ENCODE measurements at regions of chr3 and their contacts with region 1.

Region 1: GRCh38 chr3:118884748-118885206 is 149.9 kb downstream of the IGSF11 start:
- DNase-seq: peak; percentile 57
- H3K4me3 ChIP-seq: peak overlapping the region in 1 of 2 experiments; percentile 44; a peak in 1 of 4 replicates
- H3K27ac ChIP-seq: no peak overlapping the region
- H3K4me1 ChIP-seq: no peaks in the 10 kb centered on the region
- H3K27me3 ChIP-seq: no peaks in the 10 kb centered on the region
- CTCF ChIP-seq: peak; percentile 96
- EP300 ChIP-seq: no peak
- RAD21 ChIP-seq: peak; percentile 58

Region 2: DNA sequence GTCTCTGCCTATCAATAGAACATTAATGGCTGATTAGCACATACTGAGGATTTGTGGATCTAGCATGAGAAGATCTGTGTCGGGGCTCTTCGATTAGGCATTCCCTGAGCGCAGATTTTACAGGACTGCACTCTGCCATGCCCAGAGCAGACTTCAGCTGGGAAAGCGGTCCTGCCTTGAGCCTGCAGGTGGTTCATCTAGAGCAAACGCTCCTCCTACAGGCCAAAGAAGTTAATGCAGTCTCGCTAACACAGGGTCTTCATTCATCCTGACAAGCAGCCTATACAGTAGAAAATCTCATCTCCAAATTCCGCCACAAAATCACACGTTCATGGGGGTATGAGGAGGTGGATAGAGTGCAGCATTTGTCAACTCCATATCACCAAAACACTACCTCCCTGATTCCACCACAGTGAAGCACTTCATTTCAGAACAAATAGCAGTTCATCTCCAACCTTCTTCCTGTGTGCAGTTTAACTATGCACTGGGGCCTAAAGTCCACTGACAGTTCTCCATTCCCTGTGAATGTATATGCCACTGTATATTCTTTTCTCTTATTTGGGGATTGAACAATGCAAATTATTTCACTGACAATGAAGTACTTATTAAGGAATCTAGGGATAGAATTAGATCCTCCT is 256.0 kb before region 1 on chr3:
- CTCF ChIA-PET with region 1: no interaction called
- POLR2A ChIA-PET with region 1: no interaction called
- DNase-seq: peak; percentile 66
- H3K4me3 ChIP-seq: no peak overlapping the region; a peak in 1 of 4 replicates
- H3K27ac ChIP-seq: no peak overlapping the region
- H3K4me1 ChIP-seq: peaks cover 0 to 4% of the 10 kb centered on the region in 2 experiments; a peak in 2 of 4 replicates
- H3K27me3 ChIP-seq: no peaks in the 10 kb centered on the region
- CTCF ChIP-seq: peak; percentile 77
- EP300 ChIP-seq: no peak
- RAD21 ChIP-seq: peak; percentile 99

Region 3: DNA sequence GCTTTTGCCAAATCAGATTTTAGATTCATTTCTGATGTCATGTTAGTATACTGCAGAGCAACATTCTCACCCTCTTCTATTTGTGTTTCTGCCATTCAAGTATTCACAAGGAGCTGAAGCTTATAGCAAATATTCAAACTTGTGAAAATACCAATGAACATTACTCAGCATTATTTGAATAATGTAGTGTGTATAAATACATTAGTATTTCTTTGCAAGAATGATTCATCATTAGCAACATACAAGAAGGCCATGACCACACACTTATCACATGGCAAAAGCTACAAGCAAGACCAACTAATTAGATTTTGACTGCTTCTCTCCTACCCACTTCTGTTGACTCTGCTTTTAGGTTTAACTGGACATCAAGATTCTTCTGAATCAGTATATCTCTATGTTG is 25.0 kb after region 1 on chr3:
- CTCF ChIA-PET with region 1: interaction called, 67 read pairs
- POLR2A ChIA-PET with region 1: no interaction called
- DNase-seq: no peak
- H3K4me3 ChIP-seq: no peak overlapping the region
- H3K27ac ChIP-seq: no peak overlapping the region
- H3K4me1 ChIP-seq: no peaks in the 10 kb centered on the region
- H3K27me3 ChIP-seq: no peaks in the 10 kb centered on the region
- CTCF ChIP-seq: no peak
- EP300 ChIP-seq: no peak
- RAD21 ChIP-seq: no peak

Region 4: GRCh38 chr3:118981494-118982134 is 96.8 kb after region 1 on chr3:
- CTCF ChIA-PET with region 1: interaction called, 11 read pairs
- POLR2A ChIA-PET with region 1: no interaction called
- DNase-seq: no peak
- H3K4me3 ChIP-seq: no peak overlapping the region
- H3K27ac ChIP-seq: no peak overlapping the region
- H3K4me1 ChIP-seq: no peaks in the 10 kb centered on the region; a peak in 1 of 4 replicates
- H3K27me3 ChIP-seq: no peaks in the 10 kb centered on the region
- CTCF ChIP-seq: no peak
- EP300 ChIP-seq: no peak
- RAD21 ChIP-seq: no peak

Region 5: GRCh38 chr3:119034256-119035013 is 149.7 kb after region 1 on chr3 and contains the start of gene IGSF11:
- CTCF ChIA-PET with region 1: interaction called, 432 read pairs
- POLR2A ChIA-PET with region 1: interaction called, 4 read pairs
- DNase-seq: peak; percentile 96
- H3K4me3 ChIP-seq: peak within 1 kb of the TSS; percentile 60 to 69
- H3K27ac ChIP-seq: no peak within 1 kb of the TSS
- H3K4me1 ChIP-seq: no peaks in the 10 kb centered on the region; a peak in 1 of 4 replicates
- H3K27me3 ChIP-seq: peaks cover 27% of the 10 kb centered on the region
- CTCF ChIP-seq: peak; percentile 54
- EP300 ChIP-seq: no peak
- RAD21 ChIP-seq: peak; percentile 62
- polyA plus RNA-seq, gene IGSF11: 0.07 and 0.08 TPM in 2 replicates

Region 6: DNA sequence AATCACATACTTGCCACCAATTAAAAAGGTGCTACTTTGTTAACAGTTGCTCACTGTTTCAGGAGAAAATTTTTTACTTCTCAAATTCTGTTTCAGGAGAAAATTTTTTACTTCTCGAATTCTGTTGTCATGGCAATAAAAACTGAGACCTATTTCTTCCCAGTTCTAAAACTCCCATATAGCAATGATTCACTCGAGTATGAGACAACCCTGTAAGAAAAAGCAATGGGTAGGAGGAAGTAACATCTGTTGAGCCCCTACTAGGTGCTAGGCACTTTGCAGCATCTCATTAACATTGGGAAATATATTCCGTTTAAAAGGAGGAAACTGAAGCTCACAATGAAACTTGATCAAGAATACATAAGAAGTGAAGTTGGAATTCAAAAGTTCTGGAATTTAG is 184.9 kb after region 1 on chr3:
- CTCF ChIA-PET with region 1: interaction called, 34 read pairs
- POLR2A ChIA-PET with region 1: no interaction called
- DNase-seq: no peak
- H3K4me3 ChIP-seq: no peak overlapping the region
- H3K27ac ChIP-seq: no peak overlapping the region
- H3K4me1 ChIP-seq: no peaks in the 10 kb centered on the region
- H3K27me3 ChIP-seq: no peaks in the 10 kb centered on the region
- CTCF ChIP-seq: no peak
- EP300 ChIP-seq: no peak
- RAD21 ChIP-seq: no peak

Region 7: DNA sequence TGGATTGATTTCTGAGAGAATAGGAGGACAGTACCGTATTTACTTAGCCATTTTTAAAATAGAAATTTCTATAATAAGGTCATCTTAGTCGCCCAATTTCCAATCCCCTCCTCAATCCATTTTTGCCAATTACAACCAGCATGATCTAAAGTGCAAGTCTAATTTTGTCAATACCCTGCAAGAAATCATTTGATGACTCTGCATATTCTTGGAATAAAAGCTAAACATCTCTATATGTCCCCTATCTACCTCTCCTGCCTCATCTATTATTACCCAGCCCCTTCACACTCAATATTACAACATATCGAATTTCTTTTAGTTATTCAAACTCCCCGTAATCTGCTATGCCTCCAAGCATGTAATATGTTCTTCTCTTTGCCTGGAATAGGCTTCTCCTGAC is 219.3 kb after region 1 on chr3:
- CTCF ChIA-PET with region 1: interaction called, 521 read pairs
- POLR2A ChIA-PET with region 1: no interaction called
- DNase-seq: no peak
- H3K4me3 ChIP-seq: no peak overlapping the region
- H3K27ac ChIP-seq: no peak overlapping the region
- H3K4me1 ChIP-seq: no peaks in the 10 kb centered on the region
- H3K27me3 ChIP-seq: no peaks in the 10 kb centered on the region
- CTCF ChIP-seq: no peak
- EP300 ChIP-seq: no peak
- RAD21 ChIP-seq: no peak

Region 8: DNA sequence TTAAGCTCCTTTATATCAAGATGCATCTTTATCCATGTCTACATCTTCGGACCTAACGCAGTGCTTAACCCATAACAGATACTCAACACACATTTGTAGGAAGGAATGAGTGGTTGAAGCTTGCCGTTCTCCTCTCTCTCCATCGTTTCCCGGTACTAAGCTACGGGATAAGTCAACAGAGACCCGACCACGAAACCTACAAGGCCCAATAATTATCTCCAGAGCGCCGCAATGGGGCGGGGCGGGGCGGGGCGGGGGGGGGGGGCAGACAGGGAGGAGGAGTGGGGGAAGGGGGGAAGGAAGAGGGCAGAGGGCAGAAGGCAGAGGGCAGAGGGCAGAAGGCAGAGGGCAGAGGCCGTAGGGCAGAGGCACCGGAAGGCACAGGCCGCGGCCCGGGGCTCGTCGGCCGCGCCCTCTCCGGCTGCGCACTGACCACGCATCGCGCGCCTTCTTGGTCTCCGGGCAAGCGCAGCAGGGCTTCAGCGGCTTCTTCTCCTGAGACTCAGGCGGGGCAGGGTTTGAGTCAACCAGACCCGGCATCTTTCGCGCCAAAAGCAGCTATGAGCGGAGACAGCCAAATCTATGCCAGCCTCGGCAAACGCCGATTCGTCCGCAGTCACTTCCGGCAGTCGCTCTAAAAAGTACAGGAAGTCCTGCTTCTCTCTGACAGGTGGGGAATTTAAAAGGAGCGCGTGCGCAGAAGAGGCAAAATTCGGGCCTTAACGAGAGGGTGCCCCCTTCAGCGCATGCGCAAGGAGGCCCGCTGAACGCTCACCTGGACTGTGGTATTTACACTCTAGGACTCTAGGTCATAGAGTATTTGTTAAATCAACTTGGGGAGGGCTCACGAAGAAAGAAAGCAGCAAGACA is 792.2 kb after region 1 on chr3 and contains the start of gene COX17:
- CTCF ChIA-PET with region 1: interaction called, 30 read pairs
- POLR2A ChIA-PET with region 1: no interaction called
- DNase-seq: peak; percentile 62
- H3K4me3 ChIP-seq: peak within 1 kb of the TSS; percentile 50 to 52
- H3K27ac ChIP-seq: peak within 1 kb of the TSS; percentile 29 to 81
- H3K4me1 ChIP-seq: peaks cover 0 to 27% of the 10 kb centered on the region in 2 experiments; a peak in 2 of 4 replicates
- H3K27me3 ChIP-seq: no peaks in the 10 kb centered on the region
- CTCF ChIP-seq: no peak
- EP300 ChIP-seq: no peak
- RAD21 ChIP-seq: no peak; the same call in 1 of the 2 replicates
- polyA plus RNA-seq, gene COX17: 15.1 and 21.5 TPM in 2 replicates

Region 9: DNA sequence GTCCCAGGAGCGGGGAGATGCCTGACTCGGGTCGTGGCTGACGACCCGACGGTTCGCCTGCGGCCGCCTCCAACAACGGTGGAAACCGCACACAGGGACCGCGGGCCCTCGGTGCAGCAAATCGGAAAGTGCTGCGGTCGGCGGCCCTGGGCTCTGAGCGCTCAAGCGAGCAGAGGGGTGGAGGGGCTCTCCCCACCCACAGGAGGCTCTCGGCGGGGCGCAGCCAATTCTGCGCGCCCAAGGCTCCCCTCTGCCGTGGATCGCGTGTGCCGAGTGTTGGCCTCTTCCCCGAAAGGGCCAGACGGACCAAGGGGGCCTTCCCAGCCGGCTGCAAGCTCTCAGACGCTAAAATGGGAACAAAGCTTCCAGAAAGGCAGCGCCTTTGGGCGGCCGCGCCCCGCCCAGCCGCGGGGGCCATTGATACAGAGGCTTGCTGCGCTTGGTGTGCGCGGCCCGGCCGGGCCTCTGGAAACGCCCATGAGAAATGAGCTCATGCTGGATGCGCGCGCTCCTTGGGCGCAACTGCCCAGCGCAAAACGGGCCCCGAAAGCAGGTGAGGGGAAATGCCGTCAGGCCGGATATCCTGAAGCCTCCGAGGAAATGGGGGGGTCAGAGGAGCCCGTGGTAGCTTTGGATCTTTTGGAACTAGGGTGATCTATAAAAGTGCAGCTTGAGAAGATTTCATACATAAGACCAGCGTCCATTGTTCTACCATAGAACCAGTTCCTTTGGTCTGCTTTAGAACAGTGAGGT is 1210.6 kb after region 1 on chr3:
- CTCF ChIA-PET with region 1: no interaction called
- POLR2A ChIA-PET with region 1: no interaction called
- DNase-seq: peak; percentile 77
- H3K4me3 ChIP-seq: peak overlapping the region; percentile 73 to 95
- H3K27ac ChIP-seq: peak overlapping the region; percentile 99 to 100
- H3K4me1 ChIP-seq: peaks cover 7 to 13% of the 10 kb centered on the region in 2 experiments; a peak in 3 of 4 replicates
- H3K27me3 ChIP-seq: no peaks in the 10 kb centered on the region
- CTCF ChIP-seq: no peak
- EP300 ChIP-seq: peak in 1 of 2 experiments; percentile 24; a peak in 1 of 4 replicates
- RAD21 ChIP-seq: no peak; the same call in 1 of the 2 replicates